ENCODE measurements at regions of chr3 and their contacts with region 1.

Region 1: DNA sequence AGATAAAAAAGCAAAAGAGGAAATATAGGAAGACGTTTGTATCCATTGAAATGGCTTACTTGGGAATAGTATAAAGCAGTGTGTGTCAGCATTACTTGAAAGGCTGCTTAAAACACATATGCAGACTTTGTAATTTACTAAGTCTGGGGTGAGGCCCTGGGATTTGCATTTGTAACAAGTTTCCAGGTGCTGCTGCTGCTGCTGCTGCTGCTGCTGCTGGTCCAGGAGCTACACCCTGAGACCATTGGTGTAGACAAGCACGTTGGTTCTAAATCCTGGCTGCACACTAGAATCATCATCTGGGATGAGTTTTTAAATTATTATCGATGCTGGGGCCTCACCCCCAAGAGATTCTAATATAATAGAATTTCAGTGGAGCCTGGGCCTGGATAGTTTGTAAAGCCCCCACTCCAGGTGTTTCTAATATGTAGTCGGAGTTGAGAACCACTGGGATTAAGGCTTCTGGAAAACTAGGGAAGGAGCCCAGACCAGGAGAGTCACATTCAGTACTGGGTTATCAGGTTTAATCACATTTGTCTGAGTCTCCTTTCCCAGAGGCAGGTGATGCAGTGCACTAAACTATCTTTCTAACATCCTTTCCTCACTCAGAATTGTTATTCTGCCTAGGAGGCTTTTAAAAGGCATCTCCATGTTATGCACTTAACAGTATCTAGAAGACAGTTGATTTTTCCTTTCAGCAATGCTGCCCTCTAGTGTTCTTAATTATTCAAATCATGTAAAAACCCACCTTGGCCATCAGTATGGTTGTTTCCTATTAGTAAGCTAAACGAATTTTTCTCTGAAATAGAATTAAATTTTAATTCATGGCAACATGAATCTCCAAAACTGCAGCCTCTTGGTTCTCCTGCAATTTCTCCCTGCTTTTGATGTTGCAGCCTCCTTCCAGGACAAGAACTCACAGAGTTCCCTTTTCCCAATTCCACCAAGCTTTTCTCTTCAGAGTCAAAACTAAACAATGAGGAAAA is 45.4 kb downstream of the SSR3 start:
- DNase-seq: peak in 1 of 2 donors; percentile 74
- ATAC-seq: peak; percentile 77 to 92 (median 81)
- H3K4me3 ChIP-seq: no peak overlapping the region
- H3K4me3 Mint-ChIP-seq: no peak overlapping the region
- H3K27ac ChIP-seq: no peak overlapping the region
- H3K27ac Mint-ChIP-seq: no peak overlapping the region
- H3K4me1 ChIP-seq: no peaks in the 10 kb centered on the region
- H3K4me1 Mint-ChIP-seq: no peaks in the 10 kb centered on the region
- H3K27me3 ChIP-seq: no peaks in the 10 kb centered on the region
- H3K27me3 Mint-ChIP-seq: peaks cover 25 to 51% of the 10 kb centered on the region in 2 donors
- CTCF ChIP-seq: peak; percentile 75

Region 2: DNA sequence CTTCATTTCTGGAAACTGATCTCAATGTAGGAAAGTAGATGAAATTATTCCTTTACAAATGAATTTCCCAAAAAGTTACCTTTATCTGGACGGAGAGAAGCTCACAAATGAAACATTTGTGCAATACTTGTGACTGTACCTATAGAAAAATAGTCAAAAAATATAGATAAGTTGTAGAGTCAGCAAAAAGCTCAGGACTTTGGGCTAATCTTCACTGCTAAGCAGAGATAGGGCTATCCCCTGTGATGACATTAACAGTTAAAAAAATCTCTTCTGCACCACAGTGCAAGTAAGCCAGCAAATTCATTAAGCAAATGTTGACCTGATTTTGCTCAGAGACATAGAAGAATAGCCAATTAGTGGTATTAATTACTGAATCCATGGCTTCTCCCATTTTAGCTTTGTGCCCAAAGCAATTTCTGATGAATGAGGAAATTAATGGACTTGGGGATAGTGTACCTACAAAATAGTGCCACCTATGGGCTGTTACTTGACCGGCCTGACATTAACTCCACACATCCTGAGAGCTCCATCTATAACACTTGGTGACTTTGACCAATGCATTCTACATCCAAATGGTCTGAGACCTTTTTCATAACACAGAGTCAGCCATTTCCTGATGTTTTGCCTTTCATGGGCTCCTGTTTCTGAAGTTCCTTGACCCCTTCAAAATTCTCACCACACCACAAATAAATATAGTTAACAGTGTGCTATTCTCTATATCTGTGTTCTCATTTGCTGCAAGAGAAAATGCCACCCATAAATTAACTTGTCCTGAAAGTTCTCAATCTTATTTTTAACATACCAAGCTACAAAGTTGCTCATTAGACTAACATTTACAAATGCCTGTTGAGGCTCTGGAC is 59.5 kb before region 1 on chr3:
- intact Hi-C with region 1: loop called (anchors 1 kb)
- DNase-seq: peak in 1 of 2 donors; percentile 34
- ATAC-seq: peak in 1 of 3 donors; percentile 62
- H3K4me3 ChIP-seq: no peak overlapping the region
- H3K4me3 Mint-ChIP-seq: no peak overlapping the region
- H3K27ac ChIP-seq: no peak overlapping the region
- H3K27ac Mint-ChIP-seq: no peak overlapping the region
- H3K4me1 ChIP-seq: no peaks in the 10 kb centered on the region
- H3K4me1 Mint-ChIP-seq: no peaks in the 10 kb centered on the region
- H3K27me3 ChIP-seq: no peaks in the 10 kb centered on the region
- H3K27me3 Mint-ChIP-seq: peaks cover 11 to 16% of the 10 kb centered on the region in 2 donors
- CTCF ChIP-seq: peak; percentile 36

Region 3: GRCh38 chr3:156472150-156472549 is 37.3 kb before region 1 on chr3:
- intact Hi-C with region 1: loop called (anchors 1 kb)
- DNase-seq: peak in 1 of 2 donors; percentile 43
- ATAC-seq: no peak
- H3K4me3 ChIP-seq: no peak overlapping the region
- H3K4me3 Mint-ChIP-seq: no peak overlapping the region
- H3K27ac ChIP-seq: no peak overlapping the region
- H3K27ac Mint-ChIP-seq: no peak overlapping the region
- H3K4me1 ChIP-seq: no peaks in the 10 kb centered on the region
- H3K4me1 Mint-ChIP-seq: no peaks in the 10 kb centered on the region
- H3K27me3 ChIP-seq: no peaks in the 10 kb centered on the region
- H3K27me3 Mint-ChIP-seq: peaks cover 27 to 38% of the 10 kb centered on the region in 2 donors
- CTCF ChIP-seq: no peak